ENCODE measurements at regions of chr5 and their contacts with region 1.

Region 1: DNA sequence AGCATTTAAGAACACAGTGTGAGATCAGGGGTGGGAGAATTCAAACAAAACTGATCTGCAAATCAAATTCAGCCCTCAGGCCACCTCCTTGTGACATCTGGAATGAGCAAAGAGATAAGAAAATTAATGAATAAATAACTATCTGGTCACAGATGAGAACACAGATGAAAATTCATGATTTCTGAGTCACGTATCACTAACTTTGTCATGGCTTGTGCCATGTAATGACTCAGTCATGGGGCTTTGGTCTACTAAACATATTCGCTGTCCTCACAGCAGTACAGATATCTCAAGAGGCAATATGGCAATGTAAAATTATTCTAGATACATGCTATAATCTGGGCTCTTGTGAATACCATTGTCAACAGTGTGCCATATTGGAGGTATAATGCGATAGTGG is 274.4 kb downstream of the MAN2A1 start:
- DNase-seq: no peak
- ATAC-seq: no peak
- H3K4me3 ChIP-seq: no peak overlapping the region
- H3K4me3 Mint-ChIP-seq: no peak overlapping the region
- H3K27ac ChIP-seq: no peak overlapping the region
- H3K27ac Mint-ChIP-seq: no peak overlapping the region
- H3K4me1 ChIP-seq: peaks cover 0 to 2% of the 10 kb centered on the region in 2 experiments
- H3K4me1 Mint-ChIP-seq: peaks cover 6 to 29% (median 7%) of the 10 kb centered on the region in 3 donors
- H3K27me3 ChIP-seq: no peaks in the 10 kb centered on the region
- H3K27me3 Mint-ChIP-seq: no peaks in the 10 kb centered on the region

Region 2: DNA sequence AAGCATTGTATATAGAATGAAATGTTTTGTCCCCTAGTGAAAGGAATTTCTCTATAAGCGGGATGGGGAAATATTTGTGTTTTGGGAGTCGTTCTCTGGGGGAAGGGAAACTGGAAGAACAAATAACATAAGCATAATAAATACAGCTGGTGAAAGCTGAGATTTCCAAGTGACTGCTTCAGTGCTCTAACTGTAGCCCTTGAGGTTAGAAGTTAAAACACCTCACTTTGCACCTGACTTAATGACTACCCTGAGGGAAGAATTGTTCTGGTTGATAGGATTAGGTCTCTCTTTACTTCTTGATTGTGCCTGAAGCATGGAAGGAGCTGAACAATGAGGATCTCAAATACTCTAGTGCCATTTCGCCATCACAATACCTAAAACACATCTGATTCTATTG is 33.0 kb after region 1 on chr5:
- CTCF ChIA-PET with region 1: no interaction called
- POLR2A ChIA-PET with region 1: no interaction called
- DNase-seq: no peak
- ATAC-seq: no peak
- H3K4me3 ChIP-seq: no peak overlapping the region
- H3K4me3 Mint-ChIP-seq: no peak overlapping the region
- H3K27ac ChIP-seq: no peak overlapping the region
- H3K27ac Mint-ChIP-seq: no peak overlapping the region
- H3K4me1 ChIP-seq: no peaks in the 10 kb centered on the region
- H3K4me1 Mint-ChIP-seq: peaks cover 3 to 22% (median 3%) of the 10 kb centered on the region in 3 donors
- H3K27me3 ChIP-seq: no peaks in the 10 kb centered on the region
- H3K27me3 Mint-ChIP-seq: no peaks in the 10 kb centered on the region

Region 3: GRCh38 chr5:110043025-110043424 is 78.9 kb after region 1 on chr5:
- CTCF ChIA-PET with region 1: interaction called in 1 of 2 experiments, 11 read pairs
- POLR2A ChIA-PET with region 1: no interaction called
- DNase-seq: peak in 1 of 35 experiments; percentile 23
- ATAC-seq: peak in 1 of 4 experiments; percentile 61
- H3K4me3 ChIP-seq: no peak overlapping the region
- H3K4me3 Mint-ChIP-seq: no peak overlapping the region
- H3K27ac ChIP-seq: no peak overlapping the region
- H3K27ac Mint-ChIP-seq: peak overlapping the region in 1 of 2 donors; percentile 34
- H3K4me1 ChIP-seq: no peaks in the 10 kb centered on the region
- H3K4me1 Mint-ChIP-seq: peaks cover 14 to 18% (median 18%) of the 10 kb centered on the region in 3 donors
- H3K27me3 ChIP-seq: no peaks in the 10 kb centered on the region
- H3K27me3 Mint-ChIP-seq: no peaks in the 10 kb centered on the region

Measured in T-cell (primary cell).